Ascending aorta (tissue), 2 donors: ENCODE measurements at regions of chr12 and their contacts with region 1.

Region 1: GRCh38 chr12:6613776-6614512 is 6.8 kb upstream of the CHD4 start:
- DNase-seq: peak; percentile 85 to 96
- H3K4me3 ChIP-seq: peak overlapping the region in 1 of 2 donors; percentile 35
- H3K27ac ChIP-seq: peak overlapping the region; percentile 94 to 97
- H3K4me1 ChIP-seq: peaks cover 17 to 22% of the 10 kb centered on the region in 2 donors
- H3K27me3 ChIP-seq: no peaks in the 10 kb centered on the region
- CTCF ChIP-seq: peak in 1 of 3 experiments; percentile 3

Region 2: GRCh38 chr12:6644903-6645302 is 31.0 kb after region 1 on chr12:
- intact Hi-C with region 1: loop called (anchors 2 kb)
- DNase-seq: no peak
- H3K4me3 ChIP-seq: no peak overlapping the region
- H3K27ac ChIP-seq: no peak overlapping the region
- H3K4me1 ChIP-seq: no peaks in the 10 kb centered on the region
- H3K27me3 ChIP-seq: no peaks in the 10 kb centered on the region
- CTCF ChIP-seq: peak in 2 of 3 experiments; percentile 25 to 45